ENCODE measurements at regions of chr7 and their contacts with region 1.

Region 1: GRCh38 chr7:99040104-99040958 is 103.6 kb downstream of the SMURF1 start:
- DNase-seq: peak; percentile 38
- H3K4me3 Mint-ChIP-seq: no peak overlapping the region
- H3K27ac Mint-ChIP-seq: peak overlapping the region; percentile 58
- H3K4me1 Mint-ChIP-seq: peaks cover 4% of the 10 kb centered on the region
- H3K27me3 Mint-ChIP-seq: no peaks in the 10 kb centered on the region

Region 2: DNA sequence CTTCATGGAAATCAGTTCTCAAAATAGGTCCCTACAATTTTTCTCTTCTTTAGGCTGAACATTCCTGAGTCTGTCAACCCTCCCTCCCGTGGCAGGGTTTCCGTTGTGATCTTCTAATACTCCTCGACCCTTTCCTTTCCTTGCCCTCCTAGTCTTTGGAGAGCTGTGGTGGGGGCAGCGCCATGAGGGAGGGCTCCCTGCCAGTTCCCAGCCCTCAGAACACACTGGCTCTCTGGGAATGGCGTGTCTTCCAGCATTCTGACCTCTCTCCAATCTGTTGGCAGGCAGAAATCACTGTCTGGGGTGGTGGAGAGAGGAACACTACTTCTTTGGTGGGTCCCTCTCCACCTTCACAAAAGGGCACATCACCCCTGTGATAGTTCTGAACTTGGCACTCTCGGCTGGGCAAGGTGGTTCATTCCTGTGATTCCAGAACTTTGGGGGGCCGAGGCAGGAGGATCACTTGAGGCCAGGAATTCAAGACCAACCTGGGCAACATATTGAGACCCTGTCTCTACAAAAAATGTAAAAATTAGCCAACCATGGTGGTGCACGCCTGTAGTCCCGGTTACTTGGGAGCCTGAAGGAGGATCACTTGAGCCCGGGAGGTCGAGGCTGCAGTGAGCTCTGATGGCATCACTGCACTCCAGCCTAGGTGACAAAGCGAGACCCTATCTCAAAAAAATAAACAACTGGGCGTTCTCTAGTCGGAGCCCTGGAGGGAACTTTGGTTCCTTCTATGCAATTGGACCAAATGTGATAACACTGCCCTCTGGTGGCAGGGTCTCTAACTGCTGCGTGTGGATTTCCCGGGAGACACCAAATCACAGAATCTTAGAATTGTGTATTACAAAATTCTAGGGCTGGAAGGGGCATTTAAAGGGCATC is 272.2 kb after region 1 on chr7:
- intact Hi-C with region 1: loop called (anchors 1 kb)
- DNase-seq: peak; percentile 53
- H3K4me3 Mint-ChIP-seq: no peak overlapping the region
- H3K27ac Mint-ChIP-seq: no peak overlapping the region
- H3K4me1 Mint-ChIP-seq: peaks cover 21% of the 10 kb centered on the region
- H3K27me3 Mint-ChIP-seq: peaks cover 21% of the 10 kb centered on the region

Measured in activated T-helper 1 cell treated with anti-CD3 and anti-CD28 coated beads, Interleukin-12 subunit alpha, Interleukin-12 subunit beta, Interleukin-2, Interleukin-4 antibody, amounts not matched to agents 30 ng/mL and 10 ng/mL and 1 ng/mL, durations not matched to agents 14 hours and 24 hours and 36 hours (primary cell).